A549 (cell line): ENCODE measurements at regions of chr1 and their contacts with region 1.

Region 1: GRCh38 chr1:46223472-46223943 is 20.4 kb downstream of the LURAP1 start:
- DNase-seq: peak; percentile 38 to 90
- ATAC-seq: peak; percentile 96 to 99
- H3K4me3 ChIP-seq: no peak overlapping the region
- H3K27ac ChIP-seq: peak overlapping the region in 1 of 2 experiments; percentile 56; a peak in 2 of 6 replicates
- H3K4me1 ChIP-seq: no peaks in the 10 kb centered on the region
- CTCF ChIP-seq: peak; percentile 87
- EP300 ChIP-seq: no peak
- POLR2A ChIP-seq: no peak
- RAD21 ChIP-seq: peak; percentile 73 to 78

Region 2: GRCh38 chr1:46030876-46031660 is 192.4 kb before region 1 on chr1:
- CTCF ChIA-PET with region 1: interaction called, 23 read pairs
- POLR2A ChIA-PET with region 1: no interaction called
- DNase-seq: no peak
- ATAC-seq: no peak
- H3K4me3 ChIP-seq: no peak overlapping the region
- H3K27ac ChIP-seq: no peak overlapping the region
- H3K4me1 ChIP-seq: no peaks in the 10 kb centered on the region
- CTCF ChIP-seq: no peak
- EP300 ChIP-seq: no peak
- POLR2A ChIP-seq: no peak
- RAD21 ChIP-seq: no peak

Region 3: GRCh38 chr1:46036894-46037839 is 186.3 kb before region 1 on chr1:
- CTCF ChIA-PET with region 1: interaction called, 23 read pairs
- POLR2A ChIA-PET with region 1: no interaction called
- DNase-seq: peak; percentile 65 to 71
- ATAC-seq: peak; percentile 79 to 83
- H3K4me3 ChIP-seq: no peak overlapping the region
- H3K27ac ChIP-seq: no peak overlapping the region
- H3K4me1 ChIP-seq: no peaks in the 10 kb centered on the region
- CTCF ChIP-seq: peak; percentile 82
- EP300 ChIP-seq: no peak
- POLR2A ChIP-seq: no peak
- RAD21 ChIP-seq: peak; percentile 88 to 89

Region 4: DNA sequence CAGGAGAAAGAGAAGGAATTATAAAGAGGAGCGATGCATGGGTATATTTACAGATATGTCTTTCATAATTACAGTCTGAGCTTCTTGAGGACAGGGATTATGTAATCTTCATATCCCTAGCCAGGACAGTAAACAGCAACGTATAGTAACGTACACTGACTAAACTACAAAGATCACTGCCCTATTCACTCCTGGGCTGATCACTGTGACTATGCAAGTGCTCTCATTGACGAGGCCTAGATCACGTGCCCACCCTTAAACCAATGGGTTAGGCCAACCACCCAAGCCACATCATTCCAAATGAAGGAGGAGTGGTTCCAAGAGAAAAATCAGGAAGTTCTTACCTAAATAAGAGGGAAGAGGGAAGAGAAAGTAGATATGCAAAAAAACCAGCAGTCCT is 109.6 kb before region 1 on chr1:
- CTCF ChIA-PET with region 1: no interaction called
- POLR2A ChIA-PET with region 1: no interaction called
- DNase-seq: no peak
- ATAC-seq: no peak
- H3K4me3 ChIP-seq: no peak overlapping the region
- H3K27ac ChIP-seq: no peak overlapping the region
- H3K4me1 ChIP-seq: no peaks in the 10 kb centered on the region
- CTCF ChIP-seq: no peak
- EP300 ChIP-seq: no peak
- POLR2A ChIP-seq: no peak
- RAD21 ChIP-seq: no peak

Region 5: GRCh38 chr1:46152016-46152415 is 71.5 kb before region 1 on chr1:
- CTCF ChIA-PET with region 1: no interaction called
- POLR2A ChIA-PET with region 1: no interaction called
- DNase-seq: no peak
- ATAC-seq: no peak
- H3K4me3 ChIP-seq: no peak overlapping the region
- H3K27ac ChIP-seq: no peak overlapping the region
- H3K4me1 ChIP-seq: no peaks in the 10 kb centered on the region
- CTCF ChIP-seq: no peak
- EP300 ChIP-seq: no peak
- POLR2A ChIP-seq: no peak
- RAD21 ChIP-seq: no peak

Region 6: GRCh38 chr1:46179138-46180081 is 44.1 kb before region 1 on chr1:
- CTCF ChIA-PET with region 1: interaction called, 39 read pairs
- POLR2A ChIA-PET with region 1: interaction called, 6 read pairs
- DNase-seq: peak; percentile 80 to 88
- ATAC-seq: peak; percentile 82 to 92
- H3K4me3 ChIP-seq: no peak overlapping the region
- H3K27ac ChIP-seq: peak overlapping the region; percentile 62 to 81
- H3K4me1 ChIP-seq: peaks cover 54% of the 10 kb centered on the region
- CTCF ChIP-seq: peak; percentile 76
- EP300 ChIP-seq: no peak
- POLR2A ChIP-seq: no peak
- RAD21 ChIP-seq: peak; percentile 90 to 93

Region 7: DNA sequence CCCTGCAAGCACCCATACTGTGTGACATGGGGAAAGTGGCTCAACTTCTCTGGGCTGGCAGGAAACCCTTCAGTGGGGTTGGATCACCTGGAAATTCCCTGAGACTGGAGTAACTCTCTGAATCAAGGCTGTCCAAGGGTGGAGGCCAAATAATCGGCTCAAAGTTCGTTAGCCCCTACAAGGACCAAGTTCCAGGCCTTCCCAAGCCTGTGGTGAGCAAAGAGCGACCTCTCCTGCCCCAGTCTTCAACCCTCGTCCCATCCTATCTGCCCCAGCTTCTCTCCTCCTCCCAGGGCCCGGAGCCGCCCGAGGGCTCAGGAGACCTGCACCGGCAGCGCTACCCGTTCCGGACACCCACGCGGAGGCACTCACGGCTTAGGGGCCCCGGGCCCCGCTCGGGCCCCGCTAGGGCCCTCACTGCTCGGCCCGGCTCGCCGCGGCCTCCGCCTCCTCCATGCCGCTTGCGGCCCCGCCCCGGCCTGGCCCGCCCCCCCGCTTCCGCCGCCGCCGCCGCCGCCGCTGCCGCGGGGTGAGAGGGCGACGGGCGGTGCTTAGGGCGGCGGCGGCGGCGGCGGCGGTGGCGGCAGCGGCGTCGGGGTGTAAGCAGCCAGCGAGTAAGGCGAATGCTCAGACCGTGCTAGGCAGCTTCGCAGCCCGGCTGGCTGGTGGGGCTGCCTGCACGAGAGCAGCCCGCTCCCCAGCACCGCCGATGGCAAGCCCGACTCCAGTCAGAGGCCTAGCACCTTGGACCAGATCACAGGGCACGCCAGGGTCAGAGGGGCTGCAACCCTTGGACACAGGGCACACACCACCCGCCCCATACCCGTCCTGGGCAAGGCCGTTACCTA is 25.3 kb before region 1 on chr1 and contains the start of gene POMGNT1:
- CTCF ChIA-PET with region 1: interaction called, 14 read pairs
- POLR2A ChIA-PET with region 1: interaction called, 4 read pairs
- DNase-seq: peak; percentile 57 to 73
- ATAC-seq: peak; percentile 94 to 96
- H3K4me3 ChIP-seq: peak within 1 kb of the TSS; percentile 74
- H3K27ac ChIP-seq: peak within 1 kb of the TSS; percentile 97 to 98
- H3K4me1 ChIP-seq: peaks cover 9% of the 10 kb centered on the region; the same call in 1 of the 3 replicates
- CTCF ChIP-seq: peak; percentile 40
- EP300 ChIP-seq: no peak
- POLR2A ChIP-seq: peak; percentile 58
- RAD21 ChIP-seq: peak; percentile 37 to 49
- polyA plus RNA-seq, gene POMGNT1: 33.5 and 39.5 TPM in 2 replicates

Region 8: GRCh38 chr1:46210561-46210960 is 12.9 kb before region 1 on chr1:
- CTCF ChIA-PET with region 1: interaction called, 16 read pairs
- POLR2A ChIA-PET with region 1: no interaction called
- DNase-seq: no peak
- ATAC-seq: no peak
- H3K4me3 ChIP-seq: no peak overlapping the region
- H3K27ac ChIP-seq: no peak overlapping the region
- H3K4me1 ChIP-seq: no peaks in the 10 kb centered on the region
- CTCF ChIP-seq: no peak
- EP300 ChIP-seq: no peak
- POLR2A ChIP-seq: no peak
- RAD21 ChIP-seq: no peak

Region 9: DNA sequence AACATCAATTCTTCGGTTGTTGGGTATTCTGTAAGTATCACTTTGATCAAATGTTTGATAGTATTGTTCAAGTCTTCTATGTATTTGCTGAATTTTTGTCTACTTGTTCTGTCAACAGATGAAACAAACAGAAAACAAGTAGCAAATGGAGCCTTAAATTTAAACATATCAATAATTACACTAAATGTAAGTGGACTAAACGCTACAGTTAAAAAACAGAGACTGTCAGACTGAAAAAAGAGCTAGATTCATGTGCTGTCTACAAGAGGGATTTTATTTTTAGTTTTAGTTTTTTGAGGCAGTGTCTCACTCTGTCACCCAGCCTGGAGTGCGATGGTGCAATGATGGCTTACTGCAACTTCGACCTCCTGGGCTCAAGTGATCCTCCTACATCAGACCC is 13.4 kb after region 1 on chr1:
- CTCF ChIA-PET with region 1: interaction called, 31 read pairs
- POLR2A ChIA-PET with region 1: no interaction called
- DNase-seq: no peak
- ATAC-seq: no peak
- H3K4me3 ChIP-seq: no peak overlapping the region
- H3K27ac ChIP-seq: no peak overlapping the region
- H3K4me1 ChIP-seq: no peaks in the 10 kb centered on the region
- CTCF ChIP-seq: no peak
- EP300 ChIP-seq: no peak
- POLR2A ChIP-seq: no peak
- RAD21 ChIP-seq: no peak